ENCODE measurements at regions of chr22 and their contacts with region 1.

Region 1: GRCh38 chr22:27804470-27805297 is 3.1 kb upstream of the MN1 start:
- DNase-seq: peak; percentile 41
- H3K4me3 ChIP-seq: no peak overlapping the region
- H3K27ac ChIP-seq: no peak overlapping the region
- H3K4me1 ChIP-seq: peaks cover 19% of the 10 kb centered on the region
- H3K27me3 ChIP-seq: no peaks in the 10 kb centered on the region
- CTCF ChIP-seq: peak; percentile 52 to 75

Region 2: DNA sequence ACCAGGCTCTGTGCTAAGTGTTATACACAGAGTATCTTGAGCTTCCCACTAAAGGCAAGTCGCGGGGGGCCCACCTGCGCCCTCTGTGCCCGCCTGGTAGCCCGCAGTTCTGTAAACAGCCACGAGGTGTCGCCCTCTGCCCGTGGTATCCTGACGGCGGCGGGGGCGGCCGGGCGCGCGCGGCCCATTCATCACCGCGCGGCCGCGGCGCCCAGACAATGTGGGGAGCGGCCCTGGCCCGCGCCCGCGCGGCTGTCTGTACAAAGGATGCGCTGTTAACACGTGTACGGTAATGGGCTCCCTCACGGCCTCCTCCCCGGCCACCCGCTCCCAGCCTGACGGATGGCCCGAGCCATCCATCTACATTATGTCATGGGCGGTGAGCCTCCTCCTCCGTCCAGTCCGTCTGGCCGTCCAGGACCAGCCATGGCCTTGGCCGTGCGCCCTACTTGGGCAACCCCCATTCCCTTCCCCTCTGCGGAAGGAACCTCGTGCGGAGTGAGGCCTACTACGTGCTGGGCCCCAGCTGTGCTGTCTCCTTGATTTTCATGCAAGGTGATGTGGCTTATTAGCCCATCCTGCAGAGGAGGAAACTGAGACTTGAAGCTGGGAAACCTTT is 1047.9 kb before region 1 on chr22:
- CTCF ChIA-PET with region 1: no interaction called
- dilution Hi-C with region 1: no loop called
- in situ Hi-C with region 1: loop called in 1 of 2 experiments (anchors 25 kb)
- intact Hi-C with region 1: loop called (anchors 5 kb)
- DNase-seq: peak; percentile 36
- H3K4me3 ChIP-seq: peak overlapping the region in 1 of 3 experiments; percentile 36
- H3K27ac ChIP-seq: no peak overlapping the region
- H3K4me1 ChIP-seq: peaks cover 3% of the 10 kb centered on the region
- H3K27me3 ChIP-seq: no peaks in the 10 kb centered on the region
- CTCF ChIP-seq: peak; percentile 48 to 72

Region 3: GRCh38 chr22:27207907-27208306 is 596.8 kb before region 1 on chr22:
- CTCF ChIA-PET with region 1: no interaction called
- dilution Hi-C with region 1: no loop called
- in situ Hi-C with region 1: no loop called
- intact Hi-C with region 1: loop called (anchors 10 kb)
- DNase-seq: peak; percentile 43
- H3K4me3 ChIP-seq: no peak overlapping the region
- H3K27ac ChIP-seq: no peak overlapping the region
- H3K4me1 ChIP-seq: peaks cover 6% of the 10 kb centered on the region
- H3K27me3 ChIP-seq: no peaks in the 10 kb centered on the region
- CTCF ChIP-seq: no peak

Region 4: GRCh38 chr22:27474711-27475547 is 329.8 kb before region 1 on chr22:
- CTCF ChIA-PET with region 1: no interaction called
- dilution Hi-C with region 1: no loop called
- in situ Hi-C with region 1: loop called in 1 of 2 experiments (anchors 10 kb)
- intact Hi-C with region 1: loop called (anchors 2 kb)
- DNase-seq: peak; percentile 100
- H3K4me3 ChIP-seq: peak overlapping the region in 1 of 3 experiments; percentile 4
- H3K27ac ChIP-seq: peak overlapping the region; percentile 99
- H3K4me1 ChIP-seq: peaks cover 44% of the 10 kb centered on the region
- H3K27me3 ChIP-seq: no peaks in the 10 kb centered on the region
- CTCF ChIP-seq: peak in 1 of 2 donors; percentile 10

Region 5: GRCh38 chr22:27749597-27750225 is 55.0 kb before region 1 on chr22:
- CTCF ChIA-PET with region 1: no interaction called
- dilution Hi-C with region 1: no loop called
- in situ Hi-C with region 1: no loop called
- intact Hi-C with region 1: loop called (anchors 5 kb)
- DNase-seq: peak; percentile 29
- H3K4me3 ChIP-seq: no peak overlapping the region
- H3K27ac ChIP-seq: no peak overlapping the region
- H3K4me1 ChIP-seq: peaks cover 69% of the 10 kb centered on the region
- H3K27me3 ChIP-seq: no peaks in the 10 kb centered on the region
- CTCF ChIP-seq: no peak

Region 6: DNA sequence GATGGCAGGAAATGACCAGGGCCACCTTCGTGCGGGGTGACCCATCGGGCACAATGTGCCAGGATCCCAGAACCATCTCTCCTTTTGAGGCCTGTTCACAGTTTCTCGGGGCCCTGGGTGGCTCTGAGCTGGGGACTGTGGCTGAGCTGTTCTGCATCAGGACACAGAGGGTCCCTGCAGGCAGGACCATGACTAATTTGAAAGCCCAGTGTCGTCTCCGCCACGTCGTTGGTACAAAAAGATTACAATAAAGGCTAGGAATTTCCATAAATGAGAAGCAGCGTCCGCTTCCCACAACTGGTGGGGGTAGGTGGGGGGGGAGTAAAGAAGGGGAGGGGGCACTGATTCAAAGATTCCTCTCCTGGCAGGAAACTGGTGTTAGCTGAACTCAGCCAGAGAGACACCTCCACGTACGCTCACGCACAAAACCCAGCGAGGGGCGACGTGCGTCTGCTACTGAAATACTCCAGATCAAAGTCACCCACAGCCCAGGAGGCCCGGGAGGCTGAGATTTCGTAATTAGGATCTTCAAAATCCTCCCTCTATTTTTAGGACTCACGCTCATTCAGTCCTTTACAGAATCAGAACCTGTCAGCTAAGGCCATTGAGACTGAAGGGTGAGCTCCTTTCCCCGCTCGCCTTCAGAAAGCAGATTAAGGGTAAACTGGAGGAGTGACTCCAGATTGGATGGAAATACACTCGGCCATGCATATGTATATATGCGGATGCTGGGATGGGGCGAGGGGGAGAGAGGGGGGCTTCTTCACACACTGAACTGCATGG is 14.1 kb before region 1 on chr22:
- CTCF ChIA-PET with region 1: no interaction called
- dilution Hi-C with region 1: no loop called
- in situ Hi-C with region 1: no loop called
- intact Hi-C with region 1: no loop called
- DNase-seq: no peak
- H3K4me3 ChIP-seq: no peak overlapping the region
- H3K27ac ChIP-seq: no peak overlapping the region
- H3K4me1 ChIP-seq: no peaks in the 10 kb centered on the region
- H3K27me3 ChIP-seq: no peaks in the 10 kb centered on the region
- CTCF ChIP-seq: no peak